Esophagus muscularis mucosa (tissue), 4 donors: ENCODE measurements at regions of chr6 and their contacts with region 1.

Region 1: DNA sequence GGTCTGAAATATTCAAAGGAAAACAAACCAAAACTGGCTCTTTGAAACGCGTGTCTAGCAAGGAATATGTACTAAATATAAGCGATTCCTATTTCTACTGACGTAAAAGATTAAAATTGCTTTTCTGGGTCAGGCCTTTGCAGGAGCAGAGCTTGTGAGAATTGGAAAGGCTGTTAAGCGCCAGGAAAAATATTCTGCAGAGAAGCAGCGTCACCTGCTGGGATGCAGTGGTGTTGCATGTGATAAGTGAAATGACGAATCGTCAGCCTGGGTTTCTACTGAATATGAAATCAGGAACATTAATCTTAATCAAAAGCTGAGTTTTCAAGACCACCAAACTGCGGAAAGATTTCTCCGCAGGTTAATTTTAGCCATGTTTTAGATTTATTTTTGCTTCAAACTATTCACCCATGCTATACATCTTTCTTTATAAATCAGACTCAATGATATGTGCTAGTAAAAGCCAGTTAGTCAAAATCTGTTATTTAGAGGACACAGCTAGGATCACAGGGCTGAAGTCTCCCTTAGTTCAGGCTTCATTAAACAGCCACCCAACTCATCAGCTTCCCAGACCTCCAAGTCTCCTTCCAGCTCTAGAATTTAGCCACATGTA is 67.4 kb downstream of the ALDH8A1 start:
- DNase-seq: no peak
- H3K4me3 ChIP-seq: no peak overlapping the region
- H3K27ac ChIP-seq: no peak overlapping the region
- H3K4me1 ChIP-seq: peaks cover 0 to 8% (median 2%) of the 10 kb centered on the region in 4 donors
- H3K27me3 ChIP-seq: peaks cover 0 to 7% (median 0%) of the 10 kb centered on the region in 4 donors
- CTCF ChIP-seq: peak; percentile 72 to 94 (median 73)
- EP300 ChIP-seq: no peak
- POLR2A ChIP-seq: no peak

Region 2: GRCh38 chr6:134640975-134641429 is 241.5 kb before region 1 on chr6:
- intact Hi-C with region 1: loop called (anchors 5 kb)
- DNase-seq: peak; percentile 94
- H3K4me3 ChIP-seq: no peak overlapping the region
- H3K27ac ChIP-seq: no peak overlapping the region
- H3K4me1 ChIP-seq: peaks cover 0 to 6% (median 3%) of the 10 kb centered on the region in 4 donors
- H3K27me3 ChIP-seq: no peaks in the 10 kb centered on the region
- CTCF ChIP-seq: peak; percentile 91 to 93 (median 92)
- EP300 ChIP-seq: no peak
- POLR2A ChIP-seq: no peak

Region 3: DNA sequence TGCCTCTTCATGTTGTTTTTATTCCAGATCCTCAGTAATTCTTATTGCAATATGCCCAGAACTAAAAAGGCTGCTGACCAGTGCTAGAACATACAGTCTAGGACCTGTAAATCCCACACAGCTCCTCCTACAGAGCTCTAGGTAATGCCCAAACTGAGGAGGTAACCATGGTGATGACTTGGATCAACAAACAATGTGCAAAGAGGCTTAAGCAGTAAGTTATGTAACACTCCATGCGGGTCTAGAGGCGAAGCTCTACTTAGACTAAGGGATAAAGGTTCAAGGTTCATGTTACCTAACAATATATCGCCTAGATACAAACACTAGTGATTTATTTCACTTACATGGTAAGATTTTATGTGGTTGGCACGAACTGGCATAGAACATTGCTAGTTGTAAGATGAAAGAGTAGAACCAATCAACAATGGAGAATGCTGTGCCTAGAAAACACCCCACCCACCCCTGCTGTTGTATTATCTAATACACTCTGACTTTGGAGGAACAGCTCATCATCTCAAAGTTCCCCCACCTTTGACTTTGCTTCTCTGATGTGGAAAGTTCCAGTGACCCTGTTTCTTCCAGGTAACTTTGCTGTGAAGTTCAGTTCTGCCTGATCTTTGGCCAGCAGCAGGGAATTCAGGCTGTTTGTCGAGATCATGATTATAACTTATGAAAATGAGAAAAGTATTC is 175.0 kb before region 1 on chr6:
- intact Hi-C with region 1: no loop called
- DNase-seq: no peak
- H3K4me3 ChIP-seq: no peak overlapping the region
- H3K27ac ChIP-seq: no peak overlapping the region
- H3K4me1 ChIP-seq: peaks cover 0 to 12% (median 3%) of the 10 kb centered on the region in 4 donors
- H3K27me3 ChIP-seq: no peaks in the 10 kb centered on the region
- CTCF ChIP-seq: no peak
- EP300 ChIP-seq: no peak
- POLR2A ChIP-seq: no peak

Region 4: GRCh38 chr6:134822920-134823709 is 59.4 kb before region 1 on chr6:
- intact Hi-C with region 1: loop called (anchors 5 kb)
- DNase-seq: no peak
- H3K4me3 ChIP-seq: no peak overlapping the region
- H3K27ac ChIP-seq: no peak overlapping the region
- H3K4me1 ChIP-seq: peaks cover 0 to 23% (median 21%) of the 10 kb centered on the region in 4 donors
- H3K27me3 ChIP-seq: no peaks in the 10 kb centered on the region
- CTCF ChIP-seq: peak; percentile 76 to 83 (median 80)
- EP300 ChIP-seq: no peak
- POLR2A ChIP-seq: no peak

Region 5: GRCh38 chr6:134840086-134840867 is 42.3 kb before region 1 on chr6:
- intact Hi-C with region 1: loop called (anchors 5 kb)
- DNase-seq: no peak
- H3K4me3 ChIP-seq: no peak overlapping the region
- H3K27ac ChIP-seq: no peak overlapping the region
- H3K4me1 ChIP-seq: peaks cover 6 to 25% (median 20%) of the 10 kb centered on the region in 4 donors
- H3K27me3 ChIP-seq: no peaks in the 10 kb centered on the region
- CTCF ChIP-seq: no peak
- EP300 ChIP-seq: no peak
- POLR2A ChIP-seq: no peak

Region 6: DNA sequence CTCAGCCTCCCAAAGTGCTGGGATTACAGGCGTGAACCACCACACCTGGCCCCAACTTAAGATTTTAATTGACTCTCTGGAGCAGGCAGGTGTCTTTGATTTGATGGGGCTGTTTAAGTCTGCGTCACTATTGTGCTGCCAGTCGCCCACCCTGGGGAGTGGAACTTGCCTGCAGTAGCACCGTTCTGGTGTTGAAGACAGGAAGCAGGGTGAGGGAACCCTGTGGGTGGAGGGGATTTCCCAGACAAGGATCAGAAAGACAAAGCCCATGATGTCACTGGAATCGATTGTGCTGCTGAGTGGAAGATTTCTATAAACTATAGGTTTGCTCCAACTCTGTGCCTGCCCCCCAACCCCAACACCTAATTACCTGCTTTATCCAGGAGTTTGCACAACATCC is 56.4 kb after region 1 on chr6:
- intact Hi-C with region 1: loop called (anchors 5 kb)
- DNase-seq: no peak
- H3K4me3 ChIP-seq: no peak overlapping the region
- H3K27ac ChIP-seq: no peak overlapping the region
- H3K4me1 ChIP-seq: peaks cover 0 to 22% (median 17%) of the 10 kb centered on the region in 4 donors
- H3K27me3 ChIP-seq: no peaks in the 10 kb centered on the region
- CTCF ChIP-seq: no peak
- EP300 ChIP-seq: no peak
- POLR2A ChIP-seq: no peak